ENCODE measurements at regions of chr15 and their contacts with region 1.

Region 1: DNA sequence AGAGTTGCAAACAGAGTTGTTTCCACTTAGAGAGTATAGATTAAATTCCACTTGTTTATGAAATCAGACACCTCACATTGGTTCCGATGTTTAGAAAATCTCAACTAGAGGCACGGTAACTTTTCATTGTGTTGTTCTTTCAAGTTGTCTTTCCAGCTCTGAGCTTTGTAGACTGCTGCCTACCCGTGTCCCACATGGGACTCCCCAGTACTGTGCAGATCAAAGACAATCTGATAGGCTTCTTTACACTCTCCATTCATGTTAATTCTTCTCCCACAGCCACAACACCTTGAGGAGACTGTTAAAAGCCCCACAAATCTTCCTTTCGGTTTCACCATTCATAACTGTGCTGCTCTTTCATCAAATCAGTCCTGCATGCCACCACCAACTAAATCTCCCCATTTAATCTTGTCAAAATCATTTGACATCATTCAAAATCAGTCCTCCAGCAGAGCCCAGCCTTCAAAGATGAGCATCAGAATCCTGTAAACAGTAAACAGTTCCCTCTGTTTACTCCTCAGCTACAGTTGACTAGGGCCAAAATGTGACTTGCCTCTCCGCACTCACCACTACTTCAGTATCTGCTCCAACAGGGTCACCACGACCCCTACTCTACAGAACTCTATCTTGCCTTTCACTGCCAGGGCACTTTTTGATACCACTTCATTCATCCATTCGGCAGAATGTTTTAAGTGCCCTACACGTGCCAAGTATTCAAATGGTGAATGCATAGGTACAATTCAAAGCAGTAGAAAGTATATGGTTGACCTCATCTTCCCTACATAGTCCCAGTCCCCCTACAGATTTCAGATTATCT is 8.3 kb downstream of the ANXA2 start:
- DNase-seq: no peak
- ATAC-seq: no peak
- H3K4me3 ChIP-seq: no peak overlapping the region
- H3K27ac ChIP-seq: peak overlapping the region; percentile 53; the same call in 1 of the 2 replicates
- H3K4me1 ChIP-seq: peaks cover 33% of the 10 kb centered on the region
- H3K27me3 ChIP-seq: no peaks in the 10 kb centered on the region
- CTCF ChIP-seq: no peak
- POLR2A ChIP-seq: no peak
- RAD21 ChIP-seq: no peak

Region 2: DNA sequence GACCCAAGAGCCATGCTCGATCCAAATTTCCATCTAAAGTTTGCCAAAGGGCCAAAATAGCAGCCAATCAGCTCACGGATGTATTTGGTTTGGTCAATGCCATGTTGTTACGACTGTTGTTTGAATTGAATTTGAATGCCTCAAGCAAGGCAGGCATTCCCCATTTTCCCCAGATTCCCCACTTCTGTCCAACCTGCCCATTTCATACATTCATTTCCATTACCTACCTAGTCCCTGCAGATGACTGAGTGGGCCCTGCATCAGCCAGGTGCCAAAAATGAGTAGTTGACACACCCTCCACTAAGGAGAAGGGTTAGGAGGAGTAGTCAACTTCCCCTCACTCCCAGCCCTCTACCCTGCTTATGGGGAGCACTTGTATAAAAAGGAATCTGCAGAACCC is 43.4 kb before region 1 on chr15:
- CTCF ChIA-PET with region 1: no interaction called
- POLR2A ChIA-PET with region 1: no interaction called
- dilution Hi-C with region 1: no loop called
- in situ Hi-C with region 1: no loop called
- intact Hi-C with region 1: no loop called
- DNase-seq: no peak
- ATAC-seq: no peak
- H3K4me3 ChIP-seq: no peak overlapping the region
- H3K27ac ChIP-seq: no peak overlapping the region
- H3K4me1 ChIP-seq: peaks cover 1% of the 10 kb centered on the region; the same call in 1 of the 2 replicates
- H3K27me3 ChIP-seq: no peaks in the 10 kb centered on the region
- CTCF ChIP-seq: no peak
- POLR2A ChIP-seq: no peak
- RAD21 ChIP-seq: no peak

Region 3: GRCh38 chr15:60496853-60497252 is 107.4 kb after region 1 on chr15:
- CTCF ChIA-PET with region 1: no interaction called
- POLR2A ChIA-PET with region 1: interaction called, 10 read pairs
- dilution Hi-C with region 1: no loop called
- in situ Hi-C with region 1: no loop called
- intact Hi-C with region 1: no loop called
- DNase-seq: no peak
- ATAC-seq: no peak
- H3K4me3 ChIP-seq: no peak overlapping the region
- H3K27ac ChIP-seq: no peak overlapping the region
- H3K4me1 ChIP-seq: no peaks in the 10 kb centered on the region
- H3K27me3 ChIP-seq: no peaks in the 10 kb centered on the region
- CTCF ChIP-seq: no peak
- POLR2A ChIP-seq: no peak
- RAD21 ChIP-seq: no peak